AG04449 (cell line): ENCODE measurements at regions of chr17 and their contacts with region 1.

Region 1: DNA sequence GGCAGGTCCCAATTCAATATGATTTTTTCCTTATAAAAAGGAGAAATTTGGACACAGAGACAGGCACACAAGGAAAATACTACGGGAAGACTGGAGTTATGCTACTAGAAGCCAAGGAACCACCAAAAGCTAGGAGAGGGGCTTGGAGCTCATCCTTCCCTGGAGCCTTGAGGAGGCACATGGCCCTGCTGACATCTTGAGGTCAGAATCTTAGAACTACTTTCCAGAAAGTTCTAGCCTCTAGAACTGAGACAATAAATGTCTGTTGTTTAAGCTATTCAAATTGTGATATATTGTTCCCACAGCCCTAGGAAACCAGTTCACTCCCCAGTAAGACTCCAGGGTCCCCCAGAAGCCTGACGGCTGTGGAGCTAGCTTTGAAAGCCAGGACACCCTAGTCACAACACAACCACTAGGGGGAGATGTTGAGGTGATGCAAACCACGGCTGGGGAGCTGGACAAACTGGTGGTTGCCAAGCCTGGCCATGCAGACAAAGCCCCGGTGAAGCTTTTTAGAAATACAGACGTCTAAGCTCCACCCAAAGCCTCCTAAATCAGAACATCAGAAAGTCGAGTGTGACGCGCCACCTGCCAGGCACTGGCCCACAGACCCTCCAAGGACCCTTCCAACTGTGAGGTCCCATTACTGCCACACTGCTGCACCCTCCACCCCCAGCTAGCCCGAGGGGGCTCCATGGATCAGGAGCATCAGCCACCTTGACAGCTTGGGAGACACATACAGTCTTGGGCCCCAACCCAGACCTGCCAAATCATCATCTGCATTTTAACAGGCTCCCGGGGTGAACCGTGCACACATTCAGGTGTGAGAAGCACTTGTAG is 106.4 kb downstream of the SLC39A11 start:
- DNase-seq: no peak
- H3K4me3 ChIP-seq: no peak overlapping the region
- CTCF ChIP-seq: peak; percentile 91

Region 2: DNA sequence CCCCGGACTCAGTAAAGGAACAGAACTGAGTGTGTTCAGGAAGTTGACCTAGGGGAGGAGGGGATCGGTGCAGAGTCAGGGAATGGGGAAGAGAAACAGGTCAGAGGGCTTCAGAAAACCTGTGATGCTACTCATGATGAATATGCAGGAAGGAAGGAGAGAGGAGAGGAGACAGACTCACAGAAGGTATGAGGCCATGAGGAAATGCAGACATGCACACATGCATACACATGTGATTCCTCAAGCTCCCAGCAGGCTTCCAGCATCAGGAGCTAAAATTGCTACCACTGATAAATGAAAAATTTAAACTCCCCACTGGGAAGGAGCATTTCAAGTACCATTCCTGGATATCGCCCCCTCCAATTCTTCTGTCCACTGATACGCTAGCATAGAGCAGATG is 156.2 kb before region 1 on chr17:
- CTCF ChIA-PET with region 1: no interaction called
- POLR2A ChIA-PET with region 1: no interaction called
- DNase-seq: no peak
- H3K4me3 ChIP-seq: no peak overlapping the region
- CTCF ChIP-seq: no peak

Region 3: GRCh38 chr17:72955391-72956140 is 30.5 kb before region 1 on chr17:
- CTCF ChIA-PET with region 1: interaction called, 10 read pairs
- POLR2A ChIA-PET with region 1: no interaction called
- DNase-seq: no peak
- H3K4me3 ChIP-seq: no peak overlapping the region
- CTCF ChIP-seq: no peak

Region 4: GRCh38 chr17:72998343-72998742 is 12.2 kb after region 1 on chr17:
- CTCF ChIA-PET with region 1: interaction called, 36 read pairs
- POLR2A ChIA-PET with region 1: no interaction called
- DNase-seq: no peak
- H3K4me3 ChIP-seq: no peak overlapping the region
- CTCF ChIP-seq: no peak

Region 5: GRCh38 chr17:73013816-73014663 is 27.9 kb after region 1 on chr17:
- CTCF ChIA-PET with region 1: interaction called, 36 read pairs
- POLR2A ChIA-PET with region 1: no interaction called
- DNase-seq: peak; percentile 40
- H3K4me3 ChIP-seq: no peak overlapping the region
- CTCF ChIP-seq: no peak

Region 6: GRCh38 chr17:73092523-73093135 is 106.5 kb after region 1 on chr17 and contains the start of gene SLC39A11:
- CTCF ChIA-PET with region 1: interaction called, 13 read pairs
- POLR2A ChIA-PET with region 1: no interaction called
- DNase-seq: peak; percentile 38
- H3K4me3 ChIP-seq: peak within 1 kb of the TSS; percentile 87
- CTCF ChIP-seq: no peak

Region 7: GRCh38 chr17:73192894-73193701 is 207.0 kb after region 1 on chr17 and contains the start of gene COG1:
- CTCF ChIA-PET with region 1: interaction called, 79 read pairs
- POLR2A ChIA-PET with region 1: no interaction called
- DNase-seq: no peak
- H3K4me3 ChIP-seq: peak within 1 kb of the TSS; percentile 93
- CTCF ChIP-seq: no peak